MCF 10A (cell line): ENCODE measurements at regions of chr1 and their contacts with region 1.

Region 1: DNA sequence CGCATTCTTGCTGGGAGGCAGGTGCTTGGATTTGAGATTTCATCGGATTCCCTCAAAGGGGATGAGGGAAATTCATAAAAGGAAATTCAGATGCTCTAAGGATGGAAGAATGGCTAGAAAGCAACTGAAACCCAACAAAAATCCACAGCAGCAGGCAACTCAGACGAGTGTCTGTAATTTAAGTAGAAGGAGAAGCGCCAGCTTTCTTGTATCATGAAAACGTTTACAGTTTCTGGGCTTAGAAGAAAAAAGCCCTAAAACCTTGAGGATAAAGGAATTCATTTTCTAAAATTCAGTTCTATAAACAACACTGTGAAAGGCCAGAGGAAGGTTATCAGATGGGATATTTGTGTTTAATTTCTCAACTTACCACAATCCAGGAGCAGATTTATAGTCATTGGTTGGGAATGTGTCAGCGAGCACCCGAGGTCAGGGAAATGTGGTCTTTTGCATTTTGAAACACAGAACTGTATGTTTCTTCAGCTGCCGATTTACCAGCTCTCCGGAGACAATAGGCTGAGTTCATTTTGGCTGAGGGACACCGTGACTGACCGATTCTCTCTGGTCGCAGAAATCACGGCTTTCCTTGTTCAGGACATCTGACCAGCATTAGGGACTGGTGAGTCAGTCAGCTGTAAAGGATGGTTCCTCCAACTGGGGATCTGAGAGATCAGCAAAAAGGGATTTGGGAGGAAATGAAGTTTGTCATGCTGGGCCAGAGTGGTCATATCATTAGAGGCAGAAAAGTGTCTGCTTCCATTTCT is 111.6 kb upstream of the ERRFI1 start:
- DNase-seq: peak; percentile 85
- H3K4me3 Mint-ChIP-seq: peak overlapping the region; percentile 55
- H3K27ac Mint-ChIP-seq: peak overlapping the region; percentile 93
- H3K4me1 Mint-ChIP-seq: peaks cover 44% of the 10 kb centered on the region
- H3K27me3 Mint-ChIP-seq: no peaks in the 10 kb centered on the region
- CTCF ChIP-seq: no peak

Region 2: GRCh38 chr1:8121261-8122170 is 16.1 kb before region 1 on chr1:
- CTCF ChIA-PET with region 1: interaction called, 4 read pairs
- POLR2A ChIA-PET with region 1: interaction called, 54 read pairs
- intact Hi-C with region 1: no loop called
- DNase-seq: peak; percentile 93
- H3K4me3 Mint-ChIP-seq: peak overlapping the region; percentile 35
- H3K27ac Mint-ChIP-seq: peak overlapping the region; percentile 92
- H3K4me1 Mint-ChIP-seq: peaks cover 31% of the 10 kb centered on the region
- H3K27me3 Mint-ChIP-seq: no peaks in the 10 kb centered on the region
- CTCF ChIP-seq: no peak

Region 3: DNA sequence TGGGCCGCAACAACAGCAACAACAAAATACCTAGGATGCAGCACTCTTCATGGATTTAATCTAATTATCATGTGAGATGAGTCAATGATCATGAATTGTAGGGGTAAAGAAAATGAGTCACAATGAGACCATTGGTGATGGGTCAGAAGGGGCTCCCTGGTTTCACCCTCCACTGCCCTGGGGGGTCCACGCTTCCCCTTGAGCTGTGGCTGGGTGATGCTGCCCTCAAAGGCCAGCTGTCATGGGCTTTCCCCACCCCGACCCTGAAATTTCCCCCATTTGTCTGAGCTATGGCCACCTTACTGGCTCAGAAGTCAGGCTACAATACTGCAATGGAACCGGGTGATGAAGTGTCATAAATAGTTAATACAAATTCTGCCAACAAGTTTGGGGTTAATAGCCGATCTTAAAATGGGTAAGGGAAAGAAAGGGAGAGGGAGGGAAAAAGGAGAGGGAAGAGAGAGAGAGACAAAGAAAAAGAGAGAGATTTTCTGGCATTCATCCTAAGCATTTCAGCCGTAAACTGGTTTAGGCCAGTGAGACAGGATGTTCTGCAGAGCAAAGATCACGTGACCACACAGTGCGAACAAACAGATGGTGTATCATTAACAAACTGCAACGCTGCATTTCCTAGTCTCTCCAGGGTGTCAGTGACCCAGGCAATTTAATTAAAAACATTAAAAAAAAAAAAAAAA is 31.8 kb after region 1 on chr1:
- CTCF ChIA-PET with region 1: interaction called, 8 read pairs
- POLR2A ChIA-PET with region 1: interaction called, 10 read pairs
- intact Hi-C with region 1: no loop called
- DNase-seq: peak; percentile 77
- H3K4me3 Mint-ChIP-seq: peak overlapping the region; percentile 38
- H3K27ac Mint-ChIP-seq: peak overlapping the region; percentile 94
- H3K4me1 Mint-ChIP-seq: peaks cover 21% of the 10 kb centered on the region
- H3K27me3 Mint-ChIP-seq: no peaks in the 10 kb centered on the region
- CTCF ChIP-seq: no peak

Region 4: GRCh38 chr1:8211589-8212442 is 74.2 kb after region 1 on chr1:
- CTCF ChIA-PET with region 1: interaction called, 3 read pairs
- POLR2A ChIA-PET with region 1: interaction called, 13 read pairs
- intact Hi-C with region 1: no loop called
- DNase-seq: peak; percentile 99
- H3K4me3 Mint-ChIP-seq: peak overlapping the region; percentile 51
- H3K27ac Mint-ChIP-seq: peak overlapping the region; percentile 85
- H3K4me1 Mint-ChIP-seq: peaks cover 26% of the 10 kb centered on the region
- H3K27me3 Mint-ChIP-seq: no peaks in the 10 kb centered on the region
- CTCF ChIP-seq: no peak

Region 5: DNA sequence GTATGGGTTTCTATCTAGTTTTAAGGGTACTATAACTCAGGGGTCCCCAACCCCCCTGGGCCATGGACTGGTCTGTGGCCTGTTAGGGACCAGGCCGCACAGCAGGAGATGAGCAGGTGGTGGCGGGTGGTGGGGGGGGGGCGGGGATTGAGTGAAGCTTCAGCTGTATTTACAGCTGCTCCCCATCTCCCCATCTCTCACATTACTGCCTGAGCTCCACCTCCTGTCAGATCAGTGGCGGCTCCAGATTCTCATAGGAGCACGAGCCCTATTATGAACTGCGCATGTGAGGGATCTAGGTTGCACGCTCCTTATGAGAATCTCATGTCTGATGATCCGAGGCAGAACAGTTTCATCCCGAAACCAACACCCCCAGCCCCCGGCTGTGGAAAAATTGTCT is 85.1 kb after region 1 on chr1:
- CTCF ChIA-PET with region 1: no interaction called
- POLR2A ChIA-PET with region 1: no interaction called
- intact Hi-C with region 1: no loop called
- DNase-seq: no peak
- H3K4me3 Mint-ChIP-seq: no peak overlapping the region
- H3K27ac Mint-ChIP-seq: no peak overlapping the region
- H3K4me1 Mint-ChIP-seq: peaks cover 30% of the 10 kb centered on the region
- H3K27me3 Mint-ChIP-seq: no peaks in the 10 kb centered on the region
- CTCF ChIP-seq: no peak

Region 6: GRCh38 chr1:8497210-8497801 is 359.6 kb after region 1 on chr1:
- CTCF ChIA-PET with region 1: no interaction called
- POLR2A ChIA-PET with region 1: no interaction called
- intact Hi-C with region 1: no loop called
- DNase-seq: peak; percentile 80
- H3K4me3 Mint-ChIP-seq: no peak overlapping the region
- H3K27ac Mint-ChIP-seq: peak overlapping the region; percentile 4
- H3K4me1 Mint-ChIP-seq: peaks cover 9% of the 10 kb centered on the region
- H3K27me3 Mint-ChIP-seq: no peaks in the 10 kb centered on the region
- CTCF ChIP-seq: no peak